ENCODE measurements at regions of chr6 and their contacts with region 1.

Region 1: GRCh38 chr6:130885392-130886192 is 58.4 kb downstream of the SMLR1 start:
- DNase-seq: peak; percentile 18 to 88 (median 70)
- ATAC-seq: peak; percentile 92
- H3K4me3 ChIP-seq: no peak overlapping the region
- H3K4me3 Mint-ChIP-seq: no peak overlapping the region
- H3K27ac ChIP-seq: no peak overlapping the region
- H3K27ac Mint-ChIP-seq: no peak overlapping the region
- H3K4me1 ChIP-seq: no peaks in the 10 kb centered on the region
- H3K4me1 Mint-ChIP-seq: no peaks in the 10 kb centered on the region
- H3K27me3 ChIP-seq: no peaks in the 10 kb centered on the region
- H3K27me3 Mint-ChIP-seq: no peaks in the 10 kb centered on the region
- CTCF ChIP-seq: peak; percentile 99

Region 2: DNA sequence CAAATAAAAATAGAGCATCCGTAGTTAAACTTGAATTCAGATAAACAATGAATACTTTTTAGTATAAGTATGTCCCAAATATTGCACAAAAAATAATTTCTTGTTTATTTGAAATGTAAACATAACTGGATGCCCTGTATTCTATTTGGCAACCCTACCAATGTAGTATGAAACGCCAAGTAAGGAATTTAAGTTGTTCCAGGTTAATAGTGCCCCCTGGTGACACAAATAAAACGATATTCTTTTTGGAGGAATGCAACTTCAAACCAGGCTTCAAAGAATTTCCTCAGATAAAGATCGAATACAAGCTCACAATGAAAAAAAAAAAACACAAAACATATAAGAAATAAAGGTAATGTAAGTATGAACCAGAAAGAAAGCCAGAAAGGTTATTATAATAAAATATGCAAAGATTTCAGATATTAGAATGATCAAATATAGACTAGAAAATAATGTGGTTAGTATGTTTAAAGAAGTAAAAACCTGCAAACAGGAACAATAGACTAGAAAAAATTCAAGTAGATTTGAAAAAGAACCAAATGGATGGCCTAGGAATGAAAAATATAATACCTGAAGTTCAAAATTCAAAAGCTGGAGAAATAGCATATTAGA is 231.3 kb after region 1 on chr6:
- CTCF ChIA-PET with region 1: interaction called, 20 read pairs
- POLR2A ChIA-PET with region 1: interaction called, 5 read pairs
- intact Hi-C with region 1: loop called (anchors 1 kb)
- DNase-seq: peak in 3 of 14 experiments; percentile 51 to 68 (median 64)
- ATAC-seq: no peak
- H3K4me3 ChIP-seq: no peak overlapping the region
- H3K4me3 Mint-ChIP-seq: no peak overlapping the region
- H3K27ac ChIP-seq: no peak overlapping the region
- H3K27ac Mint-ChIP-seq: no peak overlapping the region
- H3K4me1 ChIP-seq: no peaks in the 10 kb centered on the region
- H3K4me1 Mint-ChIP-seq: no peaks in the 10 kb centered on the region
- H3K27me3 ChIP-seq: no peaks in the 10 kb centered on the region
- H3K27me3 Mint-ChIP-seq: no peaks in the 10 kb centered on the region
- CTCF ChIP-seq: peak; percentile 66

Region 3: GRCh38 chr6:131199568-131200272 is 314.1 kb after region 1 on chr6:
- CTCF ChIA-PET with region 1: no interaction called
- POLR2A ChIA-PET with region 1: interaction called, 3 read pairs
- intact Hi-C with region 1: loop called in 1 of 2 experiments (anchors 10 kb)
- DNase-seq: peak; percentile 58 to 95 (median 68)
- ATAC-seq: peak; percentile 92
- H3K4me3 ChIP-seq: peak overlapping the region; percentile 43
- H3K4me3 Mint-ChIP-seq: peak overlapping the region; percentile 84
- H3K27ac ChIP-seq: peak overlapping the region; percentile 72 to 80
- H3K27ac Mint-ChIP-seq: peak overlapping the region; percentile 98
- H3K4me1 ChIP-seq: peaks cover 40% of the 10 kb centered on the region
- H3K4me1 Mint-ChIP-seq: peaks cover 68% of the 10 kb centered on the region
- H3K27me3 ChIP-seq: no peaks in the 10 kb centered on the region
- H3K27me3 Mint-ChIP-seq: no peaks in the 10 kb centered on the region
- CTCF ChIP-seq: peak; percentile 76

Region 4: GRCh38 chr6:131532580-131533039 is 647.0 kb after region 1 on chr6:
- CTCF ChIA-PET with region 1: interaction called, 21 read pairs
- POLR2A ChIA-PET with region 1: interaction called, 6 read pairs
- intact Hi-C with region 1: loop called (anchors 1 to 2 kb)
- DNase-seq: peak in 2 of 14 experiments; percentile 16 to 28
- ATAC-seq: no peak
- H3K4me3 ChIP-seq: no peak overlapping the region
- H3K4me3 Mint-ChIP-seq: no peak overlapping the region
- H3K27ac ChIP-seq: no peak overlapping the region
- H3K27ac Mint-ChIP-seq: peak overlapping the region; percentile 68
- H3K4me1 ChIP-seq: peaks cover 21% of the 10 kb centered on the region
- H3K4me1 Mint-ChIP-seq: peaks cover 61% of the 10 kb centered on the region
- H3K27me3 ChIP-seq: no peaks in the 10 kb centered on the region
- H3K27me3 Mint-ChIP-seq: no peaks in the 10 kb centered on the region
- CTCF ChIP-seq: no peak

Region 5: GRCh38 chr6:131627724-131628682 is 742.4 kb after region 1 on chr6 and contains the start of gene MED23:
- CTCF ChIA-PET with region 1: interaction called, 7 read pairs
- POLR2A ChIA-PET with region 1: interaction called, 6 read pairs
- intact Hi-C with region 1: loop called (anchors 1 to 2 kb)
- DNase-seq: peak; percentile 89 to 98 (median 95)
- ATAC-seq: peak; percentile 93
- H3K4me3 ChIP-seq: peak within 1 kb of the TSS; percentile 86
- H3K4me3 Mint-ChIP-seq: peak within 1 kb of the TSS; percentile 98
- H3K27ac ChIP-seq: peak within 1 kb of the TSS; percentile 67 to 76
- H3K27ac Mint-ChIP-seq: peak within 1 kb of the TSS; percentile 86
- H3K4me1 ChIP-seq: peaks cover 8% of the 10 kb centered on the region
- H3K4me1 Mint-ChIP-seq: peaks cover 43% of the 10 kb centered on the region
- H3K27me3 ChIP-seq: no peaks in the 10 kb centered on the region
- H3K27me3 Mint-ChIP-seq: no peaks in the 10 kb centered on the region
- CTCF ChIP-seq: peak; percentile 99
- total RNA-seq, gene MED23: 56.7 to 59.5 TPM

Region 6: GRCh38 chr6:132300323-132300949 is 1414.8 kb after region 1 on chr6:
- CTCF ChIA-PET with region 1: no interaction called
- POLR2A ChIA-PET with region 1: no interaction called
- intact Hi-C with region 1: loop called in 1 of 2 experiments (anchors 5 kb)
- DNase-seq: peak in 3 of 14 experiments; percentile 14 to 29 (median 25)
- ATAC-seq: no peak
- H3K4me3 ChIP-seq: no peak overlapping the region
- H3K4me3 Mint-ChIP-seq: no peak overlapping the region
- H3K27ac ChIP-seq: no peak overlapping the region
- H3K27ac Mint-ChIP-seq: no peak overlapping the region
- H3K4me1 ChIP-seq: no peaks in the 10 kb centered on the region
- H3K4me1 Mint-ChIP-seq: no peaks in the 10 kb centered on the region
- H3K27me3 ChIP-seq: peaks cover 0 to 11% of the 10 kb centered on the region in 2 experiments
- H3K27me3 Mint-ChIP-seq: peaks cover 31% of the 10 kb centered on the region
- CTCF ChIP-seq: no peak